Left cardiac atrium (tissue), 4 donors: ENCODE measurements at regions of chr4 and their contacts with region 1.

Region 1: DNA sequence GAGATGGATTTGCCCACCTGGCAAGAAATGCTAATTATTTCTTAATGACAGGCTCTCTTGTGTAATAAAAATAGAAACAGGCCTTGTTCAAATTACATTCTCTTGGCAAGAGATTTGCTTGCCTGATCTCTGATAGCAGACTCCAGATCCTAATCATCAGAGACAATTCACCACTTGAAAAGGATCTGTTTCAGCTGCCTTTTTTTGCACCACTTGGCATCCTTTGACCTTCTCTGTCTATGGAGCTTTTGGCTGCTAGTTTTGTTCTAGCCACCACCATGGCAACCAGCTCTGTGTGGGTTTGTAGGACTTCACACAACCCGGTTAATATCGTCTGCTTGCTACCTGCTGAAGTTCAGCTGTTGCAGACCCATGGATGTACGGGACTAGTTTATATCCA is 241.1 kb upstream of the TLL1 start:
- DNase-seq: no peak
- ATAC-seq: peak in 1 of 2 donors; percentile 70

Region 2: DNA sequence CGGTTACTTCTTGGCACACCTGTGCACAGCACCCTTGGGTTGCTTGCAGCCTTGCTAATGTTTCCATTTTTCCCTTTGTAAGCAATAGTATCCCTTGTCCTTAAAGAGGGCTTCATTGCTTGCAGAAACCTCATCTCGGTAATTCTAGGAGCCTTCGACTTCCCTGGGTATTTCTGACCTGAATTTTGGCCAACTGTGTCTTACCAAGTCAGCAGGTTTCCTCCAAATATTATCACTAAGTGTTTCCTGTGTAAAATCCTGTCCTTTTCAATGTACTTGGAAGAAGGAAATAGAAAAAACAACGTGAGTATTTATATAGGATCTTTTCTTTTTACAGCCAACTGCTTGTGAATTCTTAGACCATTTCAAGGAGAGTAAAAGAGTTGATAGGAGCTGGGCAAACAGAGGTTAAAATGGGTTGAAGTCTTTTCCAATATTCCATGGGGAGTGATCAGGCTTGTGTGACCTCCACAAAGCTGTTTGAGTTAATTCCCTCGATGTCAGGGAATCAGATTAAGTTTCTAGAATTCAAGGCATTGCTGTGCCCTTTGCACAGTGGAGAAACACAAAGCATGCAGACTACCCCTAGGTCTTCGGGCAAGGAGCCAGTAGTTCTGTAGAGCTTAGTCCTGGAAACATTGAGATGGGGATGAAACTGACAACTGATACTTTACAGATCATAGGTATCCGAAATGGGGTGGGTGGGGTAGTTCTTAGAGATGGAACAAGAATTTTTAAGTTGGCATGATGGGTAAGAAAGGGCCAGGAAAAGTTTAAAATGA is 43.2 kb before region 1 on chr4:
- intact Hi-C with region 1: loop called in 1 of 2 experiments (anchors 5 kb)
- DNase-seq: no peak
- ATAC-seq: no peak

Region 3: GRCh38 chr4:165784672-165785071 is 152.8 kb after region 1 on chr4:
- intact Hi-C with region 1: loop called in 1 of 2 experiments (anchors 10 kb)
- DNase-seq: peak; percentile 56
- ATAC-seq: peak; percentile 89 to 90